A549 (cell line): ENCODE measurements at regions of chr7 and their contacts with region 1.

Region 1: GRCh38 chr7:76069238-76069638 is 21.3 kb downstream of the MDH2 start:
- DNase-seq: peak; percentile 84 to 94
- ATAC-seq: peak; percentile 88 to 92
- H3K4me3 ChIP-seq: no peak overlapping the region
- H3K27ac ChIP-seq: peak overlapping the region; percentile 80 to 81
- H3K4me1 ChIP-seq: peaks cover 40% of the 10 kb centered on the region
- CTCF ChIP-seq: peak; percentile 55
- EP300 ChIP-seq: no peak
- POLR2A ChIP-seq: no peak
- RAD21 ChIP-seq: peak; percentile 84 to 85

Region 2: GRCh38 chr7:75866489-75867389 is 202.5 kb before region 1 on chr7:
- CTCF ChIA-PET with region 1: interaction called, 10 read pairs
- POLR2A ChIA-PET with region 1: no interaction called
- DNase-seq: peak; percentile 77 to 86
- ATAC-seq: peak; percentile 98
- H3K4me3 ChIP-seq: no peak overlapping the region
- H3K27ac ChIP-seq: peak overlapping the region; percentile 47 to 78
- H3K4me1 ChIP-seq: peaks cover 14% of the 10 kb centered on the region
- CTCF ChIP-seq: peak; percentile 92
- EP300 ChIP-seq: no peak
- POLR2A ChIP-seq: no peak
- RAD21 ChIP-seq: peak; percentile 92 to 98

Region 3: GRCh38 chr7:76031964-76032363 is 37.3 kb before region 1 on chr7:
- CTCF ChIA-PET with region 1: no interaction called
- POLR2A ChIA-PET with region 1: no interaction called
- DNase-seq: no peak
- ATAC-seq: no peak
- H3K4me3 ChIP-seq: no peak overlapping the region
- H3K27ac ChIP-seq: no peak overlapping the region
- H3K4me1 ChIP-seq: no peaks in the 10 kb centered on the region
- CTCF ChIP-seq: no peak
- EP300 ChIP-seq: no peak
- POLR2A ChIP-seq: no peak
- RAD21 ChIP-seq: no peak

Region 4: GRCh38 chr7:76054128-76055120 is 14.8 kb before region 1 on chr7:
- CTCF ChIA-PET with region 1: interaction called, 25 read pairs
- POLR2A ChIA-PET with region 1: interaction called, 3 read pairs
- DNase-seq: peak in 1 of 2 experiments; percentile 41
- ATAC-seq: peak; percentile 64 to 68; a peak in 5 of 6 replicates
- H3K4me3 ChIP-seq: no peak overlapping the region
- H3K27ac ChIP-seq: no peak overlapping the region; a peak in 1 of 6 replicates
- H3K4me1 ChIP-seq: peaks cover 24% of the 10 kb centered on the region
- CTCF ChIP-seq: no peak
- EP300 ChIP-seq: no peak
- POLR2A ChIP-seq: no peak
- RAD21 ChIP-seq: no peak

Region 5: GRCh38 chr7:76106893-76107292 is 37.7 kb after region 1 on chr7:
- CTCF ChIA-PET with region 1: interaction called, 12 read pairs
- POLR2A ChIA-PET with region 1: interaction called, 8 read pairs
- DNase-seq: no peak
- ATAC-seq: no peak
- H3K4me3 ChIP-seq: peak overlapping the region; percentile 30; the same call in 2 of the 3 replicates
- H3K27ac ChIP-seq: peak overlapping the region; percentile 85 to 90
- H3K4me1 ChIP-seq: peaks cover 58% of the 10 kb centered on the region
- CTCF ChIP-seq: no peak
- EP300 ChIP-seq: no peak
- POLR2A ChIP-seq: no peak
- RAD21 ChIP-seq: no peak

Region 6: DNA sequence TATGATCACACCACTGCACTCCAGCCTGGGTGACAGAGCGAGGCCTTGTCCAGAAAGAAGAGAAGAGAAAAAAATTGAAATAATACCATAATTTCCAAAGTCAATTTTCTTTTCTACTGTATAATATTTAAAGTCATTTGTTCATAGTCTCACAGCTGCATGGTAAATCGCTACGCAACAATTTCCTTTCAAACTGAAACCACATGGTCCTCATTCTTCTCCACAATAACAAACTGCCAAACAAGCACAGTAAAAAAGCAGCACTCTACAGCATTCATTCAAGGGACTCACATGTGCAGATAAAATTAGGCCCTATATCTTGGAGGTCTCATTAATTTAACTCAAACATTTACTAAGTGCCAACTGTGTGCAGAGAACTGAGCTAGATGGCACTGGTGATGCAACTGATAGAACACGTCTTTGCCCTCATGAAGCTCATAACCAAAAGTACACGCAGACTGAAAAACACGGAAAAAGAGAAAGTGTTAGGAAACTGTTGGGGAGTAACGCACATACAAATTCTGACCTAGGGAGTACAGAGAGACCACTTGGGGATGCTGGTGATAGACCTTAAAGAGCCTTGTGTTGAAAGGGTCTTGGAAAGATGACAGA is 64.0 kb after region 1 on chr7:
- CTCF ChIA-PET with region 1: interaction called, 151 read pairs
- POLR2A ChIA-PET with region 1: interaction called, 3 read pairs
- DNase-seq: no peak
- ATAC-seq: no peak
- H3K4me3 ChIP-seq: no peak overlapping the region
- H3K27ac ChIP-seq: no peak overlapping the region
- H3K4me1 ChIP-seq: peaks cover 11% of the 10 kb centered on the region; the same call in 2 of the 3 replicates
- CTCF ChIP-seq: no peak
- EP300 ChIP-seq: no peak
- POLR2A ChIP-seq: no peak
- RAD21 ChIP-seq: no peak

Region 7: DNA sequence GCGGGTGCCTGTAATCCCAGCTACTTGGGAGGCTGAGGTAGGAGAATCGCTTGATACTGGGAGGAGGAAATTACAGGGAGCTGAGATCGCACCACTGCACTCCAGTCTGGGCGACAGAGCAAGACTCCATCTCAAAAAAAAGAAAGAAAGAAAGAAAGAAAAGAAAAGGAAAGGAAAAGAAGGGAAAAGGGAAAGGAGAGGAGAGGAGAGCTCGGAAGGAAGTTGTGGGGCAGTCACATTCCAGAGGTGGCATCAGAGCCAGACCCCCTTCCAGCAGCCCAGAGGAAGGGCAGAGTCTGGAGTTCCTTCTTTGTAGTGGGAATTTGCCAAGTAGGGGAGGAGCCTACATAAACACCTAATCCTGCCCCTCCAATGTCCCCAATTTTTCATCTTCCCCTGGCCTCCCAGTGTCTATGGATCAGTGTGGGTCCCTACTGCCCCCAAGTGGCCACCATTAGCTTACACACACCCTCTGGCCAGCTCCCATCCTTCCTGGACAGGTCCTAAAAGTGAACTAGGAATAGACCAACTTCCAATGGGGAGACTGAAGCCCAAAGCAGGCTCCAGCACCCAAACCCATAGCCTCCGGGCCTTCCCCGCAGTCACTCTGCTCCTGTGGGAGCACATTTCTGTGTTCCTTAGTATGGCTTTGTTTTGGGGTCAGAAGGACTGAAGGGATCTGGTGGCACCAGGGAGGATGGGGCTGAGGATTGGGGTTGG is 193.6 kb after region 1 on chr7:
- CTCF ChIA-PET with region 1: interaction called, 18 read pairs
- POLR2A ChIA-PET with region 1: interaction called, 4 read pairs
- DNase-seq: peak; percentile 66 to 85
- ATAC-seq: peak; percentile 79 to 88
- H3K4me3 ChIP-seq: no peak overlapping the region
- H3K27ac ChIP-seq: no peak overlapping the region
- H3K4me1 ChIP-seq: peaks cover 7% of the 10 kb centered on the region; the same call in 2 of the 3 replicates
- CTCF ChIP-seq: peak; percentile 81
- EP300 ChIP-seq: no peak
- POLR2A ChIP-seq: no peak
- RAD21 ChIP-seq: peak; percentile 83 to 92